Activated CD4-positive, alpha-beta memory T cell treated with anti-CD3 and anti-CD28 coated beads, Interleukin-2, amount 10 ng/mL, durations not matched to agents 7 days and 5 days (primary cell): ENCODE measurements at regions of chr11 and their contacts with region 1.

Region 1: GRCh38 chr11:35173011-35173511 is 34.1 kb downstream of the CD44 start:
- DNase-seq: no peak
- H3K4me3 Mint-ChIP-seq: peak overlapping the region; percentile 21
- H3K27ac Mint-ChIP-seq: peak overlapping the region; percentile 68
- H3K4me1 Mint-ChIP-seq: peaks cover 94% of the 10 kb centered on the region
- H3K27me3 Mint-ChIP-seq: no peaks in the 10 kb centered on the region

Region 2: GRCh38 chr11:35151241-35151640 is 21.8 kb before region 1 on chr11:
- CTCF ChIA-PET with region 1: interaction called, 3 read pairs
- POLR2A ChIA-PET with region 1: interaction called, 634 read pairs
- DNase-seq: no peak
- H3K4me3 Mint-ChIP-seq: no peak overlapping the region
- H3K27ac Mint-ChIP-seq: peak overlapping the region; percentile 41
- H3K4me1 Mint-ChIP-seq: peaks cover 93% of the 10 kb centered on the region
- H3K27me3 Mint-ChIP-seq: no peaks in the 10 kb centered on the region

Region 3: DNA sequence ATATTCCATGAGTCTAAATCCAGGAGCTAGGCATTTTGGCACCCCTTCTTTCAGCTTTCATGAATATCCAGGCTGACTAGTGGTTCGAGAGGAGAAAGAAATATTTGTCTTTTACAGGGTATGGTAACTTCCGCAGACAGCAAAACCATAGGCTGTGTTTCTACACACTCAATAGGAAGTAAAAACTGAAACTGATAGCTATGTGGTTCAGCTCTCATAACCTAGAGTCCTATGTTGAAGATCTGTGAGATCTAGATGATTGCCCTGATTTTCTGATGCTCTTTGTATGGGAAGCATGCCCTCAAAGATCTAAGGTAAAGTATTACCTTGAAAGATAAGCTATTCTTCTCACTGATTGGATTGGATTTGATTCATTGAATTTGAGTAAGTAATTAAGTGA is 84.2 kb after region 1 on chr11:
- CTCF ChIA-PET with region 1: no interaction called
- POLR2A ChIA-PET with region 1: no interaction called
- DNase-seq: no peak
- H3K4me3 Mint-ChIP-seq: no peak overlapping the region
- H3K27ac Mint-ChIP-seq: peak overlapping the region; percentile 62
- H3K4me1 Mint-ChIP-seq: peaks cover 19% of the 10 kb centered on the region
- H3K27me3 Mint-ChIP-seq: peaks cover 24% of the 10 kb centered on the region